ENCODE measurements at regions of chr3 and their contacts with region 1.

Region 1: GRCh38 chr3:38108649-38109579 is 28.0 kb downstream of the ACAA1 start:
- DNase-seq: no peak
- ATAC-seq: no peak
- H3K4me3 ChIP-seq: no peak overlapping the region
- H3K27ac ChIP-seq: no peak overlapping the region
- H3K4me1 ChIP-seq: no peaks in the 10 kb centered on the region
- H3K27me3 ChIP-seq: no peaks in the 10 kb centered on the region
- CTCF ChIP-seq: no peak
- EP300 ChIP-seq: no peak
- POLR2A ChIP-seq: no peak
- RAD21 ChIP-seq: no peak

Region 2: DNA sequence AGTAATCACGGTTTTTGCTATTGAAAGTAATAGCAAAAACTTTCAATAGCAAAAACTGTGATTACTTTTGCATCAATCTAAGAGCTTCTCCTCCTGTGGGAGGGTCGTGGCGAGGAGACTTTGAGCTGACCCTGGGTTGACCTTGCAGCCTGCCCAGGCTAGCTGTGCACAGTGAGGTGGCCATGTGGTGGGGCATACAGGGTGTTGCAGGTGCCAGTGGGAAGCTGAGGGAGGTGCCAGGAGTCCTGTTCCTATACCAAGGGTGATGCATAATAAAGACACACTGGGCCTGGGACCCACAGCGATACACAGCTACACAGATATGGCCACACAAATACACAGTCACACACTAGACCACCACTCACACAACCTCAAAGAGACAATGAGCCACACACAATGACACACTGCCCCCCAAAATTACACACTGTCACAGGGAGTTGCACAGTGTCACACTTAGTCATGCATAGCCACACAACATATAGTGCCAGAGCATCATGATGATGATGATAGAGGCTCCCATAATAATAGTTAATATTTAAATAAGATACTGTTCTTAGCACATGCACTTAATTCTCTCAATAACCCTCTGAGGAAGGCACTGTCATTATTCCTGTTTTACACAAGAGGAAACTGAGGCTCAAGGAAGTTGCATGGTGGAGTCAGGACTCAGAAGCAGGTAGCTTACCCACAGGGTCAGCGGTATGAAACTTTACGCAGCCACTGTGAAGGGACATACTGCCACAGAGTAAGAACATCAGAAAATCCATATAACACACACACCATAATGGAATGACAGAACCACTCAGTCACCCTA is 85.8 kb before region 1 on chr3:
- CTCF ChIA-PET with region 1: no interaction called
- POLR2A ChIA-PET with region 1: no interaction called
- RAD21 ChIA-PET with region 1: no interaction called
- SMC1A ChIA-PET with region 1: no interaction called
- in situ Hi-C with region 1: no loop called
- intact Hi-C with region 1: no loop called
- DNase-seq: no peak
- ATAC-seq: no peak
- H3K4me3 ChIP-seq: no peak overlapping the region
- H3K27ac ChIP-seq: no peak overlapping the region
- H3K4me1 ChIP-seq: no peaks in the 10 kb centered on the region; the same call in none of the 2 replicates
- H3K27me3 ChIP-seq: peaks cover 0 to under 1% of the 10 kb centered on the region in 2 experiments; a peak in 2 of 4 replicates
- CTCF ChIP-seq: no peak
- EP300 ChIP-seq: no peak
- POLR2A ChIP-seq: no peak
- RAD21 ChIP-seq: no peak

Region 3: DNA sequence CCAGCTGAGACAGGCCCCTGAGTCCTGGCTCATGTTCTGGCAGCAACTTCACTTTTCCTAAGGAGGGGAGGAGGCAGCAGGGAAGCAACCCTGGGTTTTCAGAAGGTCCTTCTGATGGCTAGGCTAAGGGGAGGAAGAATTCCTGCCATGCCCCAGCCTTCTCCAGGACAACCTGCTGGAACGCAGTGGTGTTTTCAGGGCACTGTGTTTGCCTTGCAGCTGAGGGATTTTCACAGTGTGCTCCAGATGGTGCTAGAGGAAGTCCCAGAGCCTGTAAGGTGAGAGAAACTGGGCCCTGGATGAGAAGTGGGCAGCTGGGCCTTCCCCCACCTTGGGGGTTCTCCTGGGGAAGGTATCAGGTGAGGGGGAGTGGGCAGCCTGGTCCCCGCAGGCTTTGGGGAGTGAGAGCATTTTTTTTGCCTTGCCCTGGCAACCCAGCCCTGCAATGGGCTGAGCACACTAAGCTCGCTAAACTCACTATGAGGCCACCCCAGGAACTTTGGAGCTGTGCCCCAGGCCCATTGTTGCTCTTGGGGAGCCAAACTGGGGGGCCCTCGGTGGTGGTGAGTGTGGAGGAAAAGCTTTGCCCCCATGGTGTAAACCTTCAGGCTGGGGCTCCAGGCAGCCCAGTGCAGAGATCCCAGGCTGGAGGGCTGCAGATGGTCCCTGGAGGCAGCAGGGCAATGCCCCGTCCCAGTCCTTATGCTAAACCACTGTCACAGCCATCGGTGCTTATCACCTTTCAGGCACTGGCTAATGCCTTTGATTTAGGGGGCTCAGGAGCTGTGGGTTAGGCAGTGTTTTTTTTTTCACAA is 13.0 kb before region 1 on chr3:
- CTCF ChIA-PET with region 1: no interaction called
- POLR2A ChIA-PET with region 1: no interaction called
- RAD21 ChIA-PET with region 1: no interaction called
- SMC1A ChIA-PET with region 1: no interaction called
- in situ Hi-C with region 1: no loop called
- intact Hi-C with region 1: no loop called
- DNase-seq: no peak
- ATAC-seq: peak; percentile 29; the same call in 2 of the 3 replicates
- H3K4me3 ChIP-seq: no peak overlapping the region
- H3K27ac ChIP-seq: no peak overlapping the region
- H3K4me1 ChIP-seq: peaks cover 6% of the 10 kb centered on the region; the same call in 1 of the 2 replicates
- H3K27me3 ChIP-seq: peaks cover 0 to 4% of the 10 kb centered on the region in 2 experiments; a peak in 3 of 4 replicates
- CTCF ChIP-seq: no peak
- EP300 ChIP-seq: no peak
- POLR2A ChIP-seq: no peak
- RAD21 ChIP-seq: no peak

Region 4: GRCh38 chr3:38164966-38165680 is 56.2 kb after region 1 on chr3 and contains the start of gene OXSR1:
- CTCF ChIA-PET with region 1: no interaction called
- POLR2A ChIA-PET with region 1: no interaction called
- RAD21 ChIA-PET with region 1: no interaction called
- SMC1A ChIA-PET with region 1: no interaction called
- in situ Hi-C with region 1: no loop called
- intact Hi-C with region 1: no loop called
- DNase-seq: peak; percentile 100
- ATAC-seq: peak; percentile 89
- H3K4me3 ChIP-seq: peak within 1 kb of the TSS; percentile 92
- H3K27ac ChIP-seq: peak within 1 kb of the TSS; percentile 100
- H3K4me1 ChIP-seq: peaks cover 4% of the 10 kb centered on the region; the same call in 1 of the 2 replicates
- H3K27me3 ChIP-seq: no peaks in the 10 kb centered on the region
- CTCF ChIP-seq: no peak
- EP300 ChIP-seq: no peak; a peak in 1 of 4 replicates
- POLR2A ChIP-seq: peak; percentile 93
- RAD21 ChIP-seq: no peak
- polyA plus RNA-seq, gene OXSR1: 12.4 to 16.9 TPM

Region 5: GRCh38 chr3:38346587-38347410 is 237.9 kb after region 1 on chr3 and contains the start of gene XYLB:
- CTCF ChIA-PET with region 1: no interaction called
- POLR2A ChIA-PET with region 1: interaction called, 11 read pairs
- RAD21 ChIA-PET with region 1: no interaction called
- SMC1A ChIA-PET with region 1: no interaction called
- in situ Hi-C with region 1: no loop called
- intact Hi-C with region 1: no loop called
- DNase-seq: peak; percentile 44
- ATAC-seq: peak; percentile 98
- H3K4me3 ChIP-seq: peak within 1 kb of the TSS; percentile 86
- H3K27ac ChIP-seq: peak within 1 kb of the TSS; percentile 42
- H3K4me1 ChIP-seq: no peaks in the 10 kb centered on the region; the same call in 1 of the 2 replicates
- H3K27me3 ChIP-seq: no peaks in the 10 kb centered on the region
- CTCF ChIP-seq: peak; percentile 84 to 89 (median 88)
- EP300 ChIP-seq: peak in 1 of 2 experiments; percentile 58; a peak in 1 of 4 replicates
- POLR2A ChIP-seq: peak; percentile 79
- RAD21 ChIP-seq: peak; percentile 53
- polyA plus RNA-seq, gene XYLB: 0.60 to 0.80 TPM

Measured in GM12878 (cell line).